Endothelial cell of umbilical vein (primary cell): ENCODE measurements at regions of chr21 and their contacts with region 1.

Region 1: GRCh38 chr21:44093761-44094160 is 13.4 kb upstream of the PWP2 start:
- DNase-seq: no peak
- H3K4me3 ChIP-seq: no peak overlapping the region
- H3K27ac ChIP-seq: no peak overlapping the region
- H3K4me1 ChIP-seq: no peaks in the 10 kb centered on the region
- H3K27me3 ChIP-seq: no peaks in the 10 kb centered on the region
- CTCF ChIP-seq: no peak
- POLR2A ChIP-seq: no peak

Region 2: GRCh38 chr21:44083631-44084291 is 10.0 kb before region 1 on chr21:
- CTCF ChIA-PET with region 1: interaction called, 10 read pairs
- POLR2A ChIA-PET with region 1: no interaction called
- dilution Hi-C with region 1: no loop called
- intact Hi-C with region 1: no loop called
- DNase-seq: peak; percentile 85
- H3K4me3 ChIP-seq: peak overlapping the region in 1 of 3 experiments; percentile 3
- H3K27ac ChIP-seq: peak overlapping the region; percentile 84
- H3K4me1 ChIP-seq: peaks cover 36% of the 10 kb centered on the region
- H3K27me3 ChIP-seq: no peaks in the 10 kb centered on the region
- CTCF ChIP-seq: no peak
- POLR2A ChIP-seq: no peak